ENCODE measurements at regions of chr1 and their contacts with region 1.

Region 1: DNA sequence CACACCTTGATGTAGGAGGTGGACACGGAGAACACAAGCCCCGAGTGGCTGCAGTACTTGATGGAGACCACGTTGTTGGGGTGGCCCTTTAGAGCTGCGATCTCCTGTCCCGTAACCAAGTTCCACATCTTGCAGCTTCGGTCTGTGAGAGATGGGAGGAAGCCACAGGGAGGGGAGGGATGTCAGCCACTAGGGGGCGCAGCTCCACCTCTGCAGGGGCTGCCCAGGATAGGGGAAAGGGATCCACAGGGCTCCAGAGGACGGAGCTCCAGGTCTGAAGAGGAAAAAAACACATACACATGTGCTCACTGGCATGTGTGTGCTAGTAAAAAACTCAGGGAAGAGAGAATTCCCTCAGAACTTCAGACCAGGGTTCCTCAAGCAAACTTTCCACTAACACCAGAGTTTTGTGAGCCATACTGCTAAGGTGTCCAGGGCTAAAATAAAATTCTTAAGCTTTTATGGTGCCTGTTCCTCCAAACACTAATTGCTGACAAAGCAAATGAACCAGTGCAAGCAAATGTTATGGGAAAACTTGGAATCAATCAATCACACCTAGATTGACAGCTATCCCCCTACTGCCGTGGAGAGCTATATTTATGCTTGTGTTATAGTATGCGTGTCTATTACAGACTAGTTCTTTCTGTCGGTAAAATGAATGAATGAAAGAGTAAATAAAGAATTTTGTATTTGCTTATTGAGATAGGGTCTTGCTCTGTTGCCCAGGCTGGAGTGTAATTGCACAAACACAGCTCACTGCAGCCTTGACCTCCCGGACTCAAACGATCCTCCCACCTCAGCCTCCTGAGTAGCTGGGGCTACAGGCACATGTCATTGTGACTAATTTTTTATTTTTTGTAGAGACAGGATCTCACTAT is 43.7 kb downstream of the KIF21B start:
- DNase-seq: peak; percentile 82

Region 2: GRCh38 chr1:200992382-200993048 is 12.7 kb after region 1 on chr1:
- CTCF ChIA-PET with region 1: interaction called, 10 read pairs
- POLR2A ChIA-PET with region 1: interaction called, 3 read pairs
- DNase-seq: no peak

Region 3: DNA sequence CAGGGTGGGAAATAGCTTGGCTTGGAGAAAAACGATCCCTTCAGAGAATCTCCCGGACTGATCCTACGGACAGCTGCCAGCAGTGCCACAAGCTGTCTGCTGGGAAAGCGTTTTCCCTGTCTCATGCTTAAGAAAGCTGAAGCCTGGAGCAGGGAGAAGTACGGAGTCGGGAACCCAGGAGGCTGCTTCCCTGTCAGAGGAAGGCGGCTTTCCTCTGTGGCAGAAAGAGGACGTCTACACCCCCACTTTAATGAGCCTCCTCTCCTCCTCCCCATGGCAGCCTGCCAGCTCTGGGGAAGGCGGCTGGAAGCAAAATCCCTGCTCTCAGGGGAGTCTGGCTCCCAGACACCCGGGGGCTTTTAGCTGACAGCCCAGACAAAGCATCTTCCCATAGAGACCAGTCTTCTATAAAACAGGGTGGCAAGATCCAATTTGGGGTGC is 36.4 kb after region 1 on chr1:
- CTCF ChIA-PET with region 1: interaction called, 14 read pairs
- POLR2A ChIA-PET with region 1: no interaction called
- DNase-seq: peak; percentile 48

Region 4: DNA sequence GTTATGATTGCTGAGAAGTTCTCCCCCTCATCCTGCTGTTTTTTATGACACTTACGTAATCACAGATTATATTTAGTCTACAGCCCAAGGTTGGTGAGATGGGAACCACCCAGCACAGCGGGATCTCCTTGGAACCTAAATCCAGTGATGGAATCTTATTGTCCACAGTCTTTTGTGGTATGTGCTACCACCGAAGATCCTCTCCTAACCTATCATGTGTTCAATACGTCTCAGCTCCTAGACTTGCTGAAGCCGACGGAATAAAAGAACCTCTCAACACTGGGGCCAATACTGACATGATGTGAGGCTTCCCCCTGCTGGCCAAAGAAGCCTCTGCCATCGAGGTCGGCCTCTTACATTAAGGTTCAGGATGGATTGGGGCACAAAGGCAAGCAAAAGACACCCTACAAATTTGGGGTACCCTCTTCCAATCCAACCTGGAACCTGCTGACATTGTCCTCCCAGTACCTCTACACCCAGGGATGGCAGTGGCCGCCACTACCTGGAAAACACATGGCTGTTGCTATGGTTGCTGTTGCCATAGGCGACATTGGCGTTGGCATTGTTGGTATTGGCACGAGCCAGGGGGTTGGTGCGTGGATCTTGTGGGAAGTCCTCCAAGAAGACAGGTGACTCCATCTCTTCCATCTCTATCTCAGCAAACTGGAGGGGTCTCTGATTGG is 63.1 kb after region 1 on chr1:
- CTCF ChIA-PET with region 1: interaction called, 13 read pairs
- POLR2A ChIA-PET with region 1: no interaction called
- DNase-seq: peak; percentile 85

Region 5: GRCh38 chr1:201119206-201120197 is 139.7 kb after region 1 on chr1:
- CTCF ChIA-PET with region 1: interaction called, 10 read pairs
- POLR2A ChIA-PET with region 1: no interaction called
- DNase-seq: peak; percentile 83

Measured in HEK293T (cell line).